Activated B cell treated with CpG ODN at 0.5 μM for 24 hours (primary cell): ENCODE measurements at regions of chr1 and their contacts with region 1.

Region 1: GRCh38 chr1:9760824-9761223 is 62.9 kb downstream of the CLSTN1 start:
- DNase-seq: no peak
- ATAC-seq: no peak
- H3K4me3 Mint-ChIP-seq: no peak overlapping the region
- H3K27ac Mint-ChIP-seq: no peak overlapping the region
- H3K4me1 Mint-ChIP-seq: no peaks in the 10 kb centered on the region
- H3K27me3 Mint-ChIP-seq: no peaks in the 10 kb centered on the region
- CTCF ChIP-seq: no peak

Region 2: DNA sequence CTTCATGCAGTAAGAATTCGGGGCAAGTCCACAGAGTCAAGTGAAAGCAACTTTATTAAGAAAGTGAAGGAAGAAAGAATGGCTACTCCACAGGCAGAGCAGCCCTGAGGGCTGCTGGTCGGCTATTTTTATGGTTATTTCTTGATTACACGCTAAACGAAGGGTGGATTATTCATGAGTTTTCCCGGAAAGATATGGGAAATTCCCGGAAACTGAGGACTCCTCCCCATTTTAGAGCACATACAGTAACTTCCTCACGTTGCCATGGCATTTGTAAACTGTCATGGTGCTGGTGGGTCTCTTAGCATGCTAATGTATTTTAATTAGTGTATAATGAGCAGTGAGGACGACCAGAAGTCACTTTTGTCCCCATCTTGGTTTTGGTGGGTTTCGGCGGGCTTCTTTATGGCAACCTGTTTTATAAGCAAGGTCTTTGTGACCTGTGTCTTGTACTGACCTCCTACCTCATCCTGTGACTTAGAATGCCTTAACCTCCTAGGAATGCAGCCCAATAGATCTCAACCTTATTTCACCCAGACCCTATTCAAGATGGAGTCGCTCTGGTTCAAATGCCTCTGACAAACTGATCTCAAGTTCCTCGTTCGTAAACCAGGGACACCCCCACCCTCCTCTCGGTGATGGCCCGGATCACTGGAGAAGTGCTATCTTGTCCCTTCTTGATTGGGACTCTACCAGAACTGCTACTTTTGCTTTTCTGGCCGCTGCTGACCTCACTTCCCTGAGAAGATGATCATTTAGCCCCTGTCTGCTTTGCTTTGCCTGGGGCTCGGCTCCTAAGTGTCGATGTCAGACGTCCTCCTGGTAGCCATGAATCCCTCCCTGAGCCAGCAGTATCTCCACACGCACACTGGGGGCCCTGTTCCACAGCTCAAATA is 14.1 kb after region 1 on chr1:
- CTCF ChIA-PET with region 1: no interaction called
- POLR2A ChIA-PET with region 1: no interaction called
- intact Hi-C with region 1: loop called (anchors 1 kb)
- DNase-seq: no peak
- ATAC-seq: no peak
- H3K4me3 Mint-ChIP-seq: no peak overlapping the region
- H3K27ac Mint-ChIP-seq: no peak overlapping the region
- H3K4me1 Mint-ChIP-seq: peaks cover 2% of the 10 kb centered on the region
- H3K27me3 Mint-ChIP-seq: no peaks in the 10 kb centered on the region
- CTCF ChIP-seq: no peak

Region 3: GRCh38 chr1:9867408-9868243 is 106.8 kb after region 1 on chr1:
- CTCF ChIA-PET with region 1: no interaction called
- POLR2A ChIA-PET with region 1: no interaction called
- intact Hi-C with region 1: no loop called
- DNase-seq: peak; percentile 79
- ATAC-seq: peak; percentile 97
- H3K4me3 Mint-ChIP-seq: no peak overlapping the region
- H3K27ac Mint-ChIP-seq: no peak overlapping the region
- H3K4me1 Mint-ChIP-seq: no peaks in the 10 kb centered on the region
- H3K27me3 Mint-ChIP-seq: no peaks in the 10 kb centered on the region
- CTCF ChIP-seq: peak; percentile 24